ENCODE measurements at regions of chr17 and their contacts with region 1.

Region 1: DNA sequence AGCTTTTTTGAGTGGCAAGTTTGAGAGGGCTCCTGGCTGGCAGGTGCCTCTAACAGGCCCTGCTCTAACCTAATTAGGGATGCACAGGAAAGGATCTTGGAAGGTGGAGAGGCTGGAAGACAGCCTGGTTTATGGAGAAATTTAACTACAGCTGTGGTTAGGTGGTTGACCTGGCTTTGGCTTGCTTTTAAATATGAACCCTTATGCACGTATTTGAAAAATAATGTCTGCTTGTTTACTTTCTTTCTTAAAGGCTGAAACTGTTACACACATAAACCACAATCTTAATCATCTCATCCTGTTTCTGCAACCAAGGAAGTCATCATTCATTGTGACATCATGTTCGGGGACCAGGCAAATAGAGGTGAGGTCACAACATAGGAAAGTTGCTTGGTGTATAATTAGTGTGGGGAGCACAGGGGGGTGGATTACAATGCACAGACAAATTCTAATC is 23.1 kb upstream of the DHRS13 start:
- DNase-seq: peak; percentile 59
- ATAC-seq: peak; percentile 85
- H3K4me3 Mint-ChIP-seq: peak overlapping the region; percentile 31
- H3K27ac Mint-ChIP-seq: peak overlapping the region; percentile 82
- H3K4me1 Mint-ChIP-seq: peaks cover 59% of the 10 kb centered on the region
- H3K27me3 Mint-ChIP-seq: no peaks in the 10 kb centered on the region
- CTCF ChIP-seq: no peak

Region 2: GRCh38 chr17:28579526-28579925 is 346.4 kb before region 1 on chr17:
- CTCF ChIA-PET with region 1: no interaction called
- POLR2A ChIA-PET with region 1: no interaction called
- intact Hi-C with region 1: no loop called
- DNase-seq: peak; percentile 42
- ATAC-seq: no peak
- H3K4me3 Mint-ChIP-seq: no peak overlapping the region
- H3K27ac Mint-ChIP-seq: peak overlapping the region; percentile 31
- H3K4me1 Mint-ChIP-seq: peaks cover 34% of the 10 kb centered on the region
- H3K27me3 Mint-ChIP-seq: no peaks in the 10 kb centered on the region
- CTCF ChIP-seq: no peak

Region 3: GRCh38 chr17:28878981-28879380 is 47.0 kb before region 1 on chr17:
- CTCF ChIA-PET with region 1: no interaction called
- POLR2A ChIA-PET with region 1: no interaction called
- intact Hi-C with region 1: loop called (anchors 1 kb)
- DNase-seq: peak; percentile 55
- ATAC-seq: peak; percentile 57
- H3K4me3 Mint-ChIP-seq: no peak overlapping the region
- H3K27ac Mint-ChIP-seq: peak overlapping the region; percentile 7
- H3K4me1 Mint-ChIP-seq: peaks cover 29% of the 10 kb centered on the region
- H3K27me3 Mint-ChIP-seq: no peaks in the 10 kb centered on the region
- CTCF ChIP-seq: no peak

Region 4: DNA sequence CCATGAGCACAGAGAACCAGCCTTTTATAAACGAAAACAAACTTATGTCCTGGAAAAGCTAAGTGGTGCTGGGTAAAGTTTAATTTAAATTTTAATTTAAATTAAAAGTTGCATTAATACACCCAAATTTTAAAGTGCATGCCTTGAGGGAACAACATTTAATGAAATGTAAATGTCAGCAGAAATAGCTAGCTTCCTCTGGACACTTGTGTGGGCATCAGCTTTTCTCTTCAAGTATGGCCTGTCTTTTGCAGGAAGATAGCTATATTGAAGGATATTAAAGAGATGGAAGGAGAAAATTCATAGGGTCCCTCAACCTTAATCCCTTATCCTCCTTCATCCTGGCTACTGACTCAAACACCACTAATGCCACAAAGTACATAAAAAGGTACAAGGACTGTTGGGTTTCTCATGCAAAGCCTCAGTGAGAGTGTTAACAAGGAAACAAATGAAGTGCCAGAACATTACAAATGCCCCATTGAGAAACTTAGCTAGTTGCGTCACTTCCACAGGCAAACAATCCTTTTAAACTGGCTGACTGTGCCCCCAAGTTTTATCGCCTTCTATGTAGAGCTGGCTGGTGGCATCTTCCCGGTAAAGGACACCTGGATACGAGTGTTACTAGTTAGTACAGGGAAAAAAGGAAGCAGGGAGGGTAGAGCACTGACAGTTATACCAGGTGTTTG is 11.2 kb after region 1 on chr17:
- CTCF ChIA-PET with region 1: interaction called, 19 read pairs
- POLR2A ChIA-PET with region 1: interaction called, 13 read pairs
- intact Hi-C with region 1: no loop called
- DNase-seq: no peak
- ATAC-seq: no peak
- H3K4me3 Mint-ChIP-seq: no peak overlapping the region
- H3K27ac Mint-ChIP-seq: no peak overlapping the region
- H3K4me1 Mint-ChIP-seq: peaks cover 74% of the 10 kb centered on the region
- H3K27me3 Mint-ChIP-seq: no peaks in the 10 kb centered on the region
- CTCF ChIP-seq: no peak

Region 5: GRCh38 chr17:28946239-28946638 is 20.3 kb after region 1 on chr17:
- CTCF ChIA-PET with region 1: interaction called, 10 read pairs
- POLR2A ChIA-PET with region 1: interaction called, 19 read pairs
- intact Hi-C with region 1: no loop called
- DNase-seq: no peak
- ATAC-seq: no peak
- H3K4me3 Mint-ChIP-seq: peak overlapping the region; percentile 23
- H3K27ac Mint-ChIP-seq: peak overlapping the region; percentile 84
- H3K4me1 Mint-ChIP-seq: peaks cover 64% of the 10 kb centered on the region
- H3K27me3 Mint-ChIP-seq: no peaks in the 10 kb centered on the region
- CTCF ChIP-seq: no peak

Region 6: DNA sequence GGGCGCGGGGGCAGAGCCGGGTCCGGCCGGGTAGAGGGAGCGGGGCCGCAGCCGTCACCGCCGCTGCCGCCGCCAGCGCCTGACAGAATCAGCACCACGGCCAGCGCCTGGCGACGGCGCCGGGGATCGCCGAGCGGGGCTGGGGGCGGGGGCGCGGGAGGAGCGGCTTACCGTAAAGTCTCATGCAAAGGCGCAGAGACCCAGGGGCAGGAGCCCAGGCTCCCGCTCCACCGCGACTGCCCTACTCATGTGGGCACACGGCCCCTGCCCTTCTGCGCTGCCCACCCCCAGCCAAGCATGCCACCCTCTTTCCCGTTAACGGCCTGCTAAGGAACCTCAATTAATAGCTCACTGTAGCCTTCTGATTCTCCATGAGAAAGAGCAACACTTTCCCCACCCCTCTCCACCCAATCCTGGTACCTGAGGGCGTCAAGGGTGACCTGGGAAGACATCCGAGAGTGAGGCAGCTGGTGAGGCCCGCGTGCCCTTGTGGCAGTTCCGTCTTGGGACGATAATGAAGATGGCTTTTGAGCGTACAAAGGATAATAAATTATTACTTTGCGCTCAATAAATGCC is 80.1 kb after region 1 on chr17 and contains the start of gene SEZ6:
- CTCF ChIA-PET with region 1: no interaction called
- POLR2A ChIA-PET with region 1: no interaction called
- intact Hi-C with region 1: no loop called
- DNase-seq: peak; percentile 77
- ATAC-seq: peak; percentile 95
- H3K4me3 Mint-ChIP-seq: no peak within 1 kb of the TSS
- H3K27ac Mint-ChIP-seq: no peak within 1 kb of the TSS
- H3K4me1 Mint-ChIP-seq: peaks cover 2% of the 10 kb centered on the region
- H3K27me3 Mint-ChIP-seq: peaks cover 49% of the 10 kb centered on the region
- CTCF ChIP-seq: no peak
- total RNA-seq, gene SEZ6: not detected

Region 7: DNA sequence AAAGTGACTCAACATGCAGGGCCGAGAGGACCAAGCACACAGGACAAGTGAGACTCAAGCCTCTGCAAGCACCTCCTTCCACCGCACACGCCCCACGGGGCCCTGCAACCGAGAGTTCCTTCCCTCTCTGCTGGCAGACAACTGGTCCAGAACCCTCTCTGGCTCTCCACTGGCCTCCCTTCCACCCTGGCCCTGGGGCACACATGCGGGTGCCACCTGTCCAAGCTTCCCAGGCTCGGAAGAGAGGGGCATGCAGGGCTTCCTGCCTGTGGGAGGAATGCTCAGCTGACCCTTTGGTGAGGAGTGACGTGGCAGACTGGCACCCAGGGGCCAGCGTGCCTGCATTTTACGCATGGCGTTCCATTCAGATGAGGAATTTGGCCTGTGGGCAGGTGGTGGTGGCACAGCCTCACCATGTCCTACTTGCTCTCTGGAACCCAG is 176.8 kb after region 1 on chr17:
- CTCF ChIA-PET with region 1: no interaction called
- POLR2A ChIA-PET with region 1: no interaction called
- intact Hi-C with region 1: no loop called
- DNase-seq: no peak
- ATAC-seq: no peak
- H3K4me3 Mint-ChIP-seq: no peak overlapping the region
- H3K27ac Mint-ChIP-seq: no peak overlapping the region
- H3K4me1 Mint-ChIP-seq: peaks cover 11% of the 10 kb centered on the region
- H3K27me3 Mint-ChIP-seq: no peaks in the 10 kb centered on the region
- CTCF ChIP-seq: no peak